Right cardiac atrium (tissue), 5 donors: ENCODE measurements at regions of chr10 and their contacts with region 1.

Region 1: DNA sequence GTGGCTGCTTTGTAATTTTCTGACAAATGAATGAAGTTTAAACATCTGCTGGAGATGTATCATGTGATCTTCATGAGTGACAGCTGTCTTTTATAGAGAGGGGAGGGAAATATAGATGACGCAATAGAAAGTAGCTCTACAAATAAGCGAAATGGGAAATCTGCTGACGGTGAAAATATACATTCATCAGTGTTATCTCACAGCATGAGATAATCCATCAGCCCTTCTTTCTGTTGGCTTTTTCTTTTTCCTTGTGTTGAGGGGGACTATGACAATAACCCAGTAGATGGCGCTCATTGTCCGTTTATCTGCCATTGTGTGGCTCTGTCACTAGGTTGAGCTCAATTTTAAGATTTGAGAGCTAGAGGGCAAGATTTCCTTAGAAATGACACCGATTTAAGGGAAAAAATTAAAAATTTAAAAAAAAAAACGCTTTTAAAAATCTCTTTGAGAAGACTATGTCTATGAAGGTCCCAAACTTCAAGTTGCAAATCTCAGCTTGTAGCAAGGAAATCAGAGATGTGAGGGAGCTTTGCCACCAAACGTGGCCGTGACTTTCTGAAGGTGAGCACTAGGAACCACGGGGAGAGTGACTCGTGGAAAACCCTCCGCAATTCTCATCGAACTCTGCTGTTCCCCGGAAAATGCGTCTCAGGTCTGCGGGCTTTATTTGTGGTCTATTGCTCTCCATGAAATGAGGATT is 114.6 kb upstream of the SFMBT2 start:
- DNase-seq: no peak
- ATAC-seq: peak; percentile 73 to 78
- H3K4me3 ChIP-seq: no peak overlapping the region
- H3K27ac ChIP-seq: no peak overlapping the region
- H3K4me1 ChIP-seq: no peaks in the 10 kb centered on the region
- H3K27me3 ChIP-seq: no peaks in the 10 kb centered on the region

Region 2: DNA sequence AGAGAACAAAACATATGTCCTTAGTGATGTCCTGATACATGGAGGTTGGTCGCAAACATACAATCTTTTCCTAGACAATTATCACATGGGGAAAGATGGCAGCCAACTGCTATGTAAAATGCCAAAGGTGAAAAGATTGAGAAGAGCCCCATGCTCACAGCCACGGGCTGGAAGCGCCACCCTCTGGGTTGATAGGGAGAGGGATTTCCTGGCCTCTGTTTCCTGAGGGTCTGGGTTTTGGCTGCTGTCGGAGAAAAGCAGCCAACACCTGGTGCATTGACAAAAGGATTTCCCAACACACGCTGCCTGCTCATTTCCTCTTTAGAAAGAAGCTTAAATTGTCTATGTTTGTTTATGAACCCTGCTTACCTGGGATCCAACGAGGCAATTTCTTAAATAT is 97.5 kb after region 1 on chr10:
- intact Hi-C with region 1: loop called (anchors 5 to 10 kb)
- DNase-seq: no peak
- ATAC-seq: peak in 1 of 2 donors; percentile 54
- H3K4me3 ChIP-seq: no peak overlapping the region
- H3K27ac ChIP-seq: no peak overlapping the region
- H3K4me1 ChIP-seq: no peaks in the 10 kb centered on the region
- H3K27me3 ChIP-seq: no peaks in the 10 kb centered on the region

Region 3: DNA sequence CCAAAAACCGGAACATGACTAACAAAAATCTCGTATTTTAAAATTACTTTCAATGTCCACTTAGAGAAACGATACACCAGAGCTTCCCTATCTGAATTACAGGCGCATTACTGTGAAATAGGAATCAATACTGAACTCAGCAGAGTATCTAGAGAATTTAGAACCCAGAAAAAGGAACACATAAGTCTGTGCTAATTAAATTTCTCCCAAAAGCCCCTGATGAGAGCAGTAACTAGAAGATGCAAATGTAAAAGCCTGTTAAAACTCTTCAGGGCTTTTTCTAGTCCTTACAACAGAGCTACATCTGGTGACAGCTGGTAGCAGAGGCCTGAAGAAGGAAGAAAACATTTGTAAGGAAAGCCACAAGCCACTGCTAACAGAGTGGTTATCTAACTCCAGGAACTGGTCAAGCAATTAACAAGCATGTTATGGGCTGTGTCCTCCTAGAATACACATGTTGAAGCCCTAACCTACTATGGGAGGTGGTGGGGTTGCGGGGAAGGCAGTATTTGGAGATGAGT is 117.1 kb after region 1 on chr10:
- intact Hi-C with region 1: no loop called
- DNase-seq: no peak
- ATAC-seq: no peak
- H3K4me3 ChIP-seq: no peak overlapping the region
- H3K27ac ChIP-seq: no peak overlapping the region
- H3K4me1 ChIP-seq: no peaks in the 10 kb centered on the region
- H3K27me3 ChIP-seq: no peaks in the 10 kb centered on the region

Region 4: DNA sequence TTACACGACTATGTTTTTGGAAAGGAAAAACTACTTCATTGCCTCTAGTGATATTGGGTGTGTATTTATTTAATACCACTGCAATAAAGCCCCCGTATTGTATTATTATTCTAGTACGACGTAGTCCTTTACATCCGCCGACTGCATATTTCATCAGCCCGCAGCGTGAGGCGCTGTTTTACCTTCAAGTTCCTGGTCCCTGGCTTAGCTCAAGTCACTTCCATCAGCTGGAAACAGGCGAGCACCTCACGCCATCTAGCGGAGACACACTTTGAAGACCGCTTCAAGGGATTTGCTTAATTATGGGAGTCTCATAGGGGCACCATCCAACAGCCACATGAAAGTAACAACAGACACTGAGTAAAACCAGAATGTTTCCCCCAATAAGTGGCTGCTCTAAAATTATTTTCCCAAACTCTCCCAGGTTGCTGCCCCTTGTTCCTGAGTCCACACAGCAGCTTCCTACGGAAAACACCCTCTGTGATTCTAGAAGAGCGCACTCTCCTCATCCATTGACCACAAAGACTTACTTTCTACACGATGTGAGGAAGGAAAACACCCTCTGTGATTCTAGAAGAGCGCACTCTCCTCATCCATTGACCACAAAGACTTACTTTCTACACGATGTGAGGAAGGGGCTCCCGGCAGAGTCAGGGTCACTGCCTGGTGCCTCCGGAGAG is 161.9 kb after region 1 on chr10:
- intact Hi-C with region 1: loop called (anchors 2 to 5 kb)
- DNase-seq: peak; percentile 79 to 89 (median 83)
- ATAC-seq: peak; percentile 84 to 90
- H3K4me3 ChIP-seq: no peak overlapping the region
- H3K27ac ChIP-seq: no peak overlapping the region
- H3K4me1 ChIP-seq: no peaks in the 10 kb centered on the region
- H3K27me3 ChIP-seq: no peaks in the 10 kb centered on the region

Region 5: GRCh38 chr10:7722927-7723529 is 197.6 kb after region 1 on chr10:
- intact Hi-C with region 1: no loop called
- DNase-seq: no peak
- ATAC-seq: no peak
- H3K4me3 ChIP-seq: no peak overlapping the region
- H3K27ac ChIP-seq: no peak overlapping the region
- H3K4me1 ChIP-seq: no peaks in the 10 kb centered on the region
- H3K27me3 ChIP-seq: no peaks in the 10 kb centered on the region

Region 6: GRCh38 chr10:9302120-9302746 is 1776.8 kb after region 1 on chr10:
- intact Hi-C with region 1: loop called in 2 of 4 experiments (anchors 5 to 10 kb)
- DNase-seq: no peak
- ATAC-seq: no peak
- H3K4me3 ChIP-seq: no peak overlapping the region
- H3K27ac ChIP-seq: no peak overlapping the region
- H3K4me1 ChIP-seq: no peaks in the 10 kb centered on the region
- H3K27me3 ChIP-seq: no peaks in the 10 kb centered on the region